Panc1 (cell line): ENCODE measurements at regions of chr6 and their contacts with region 1.

Region 1: DNA sequence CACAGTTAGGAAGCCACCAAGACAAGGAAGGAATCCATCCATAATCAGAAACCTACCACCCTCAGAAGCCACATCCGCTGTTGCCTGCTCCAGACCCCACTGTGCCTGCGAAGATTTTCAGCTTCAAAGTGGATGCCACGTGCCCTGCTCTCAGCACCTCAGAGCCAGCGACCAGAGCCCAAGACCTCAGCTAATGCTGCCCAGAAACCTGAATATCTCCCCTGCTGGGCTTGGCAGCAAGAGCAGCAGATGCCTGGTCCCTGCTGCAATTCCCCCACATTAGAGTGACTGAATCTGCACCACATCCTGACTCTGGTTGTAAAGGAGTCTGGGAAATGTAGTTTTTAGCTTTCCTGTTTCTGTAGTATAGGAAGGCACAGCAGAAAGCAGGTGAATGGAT is 10.7 kb upstream of the ULBP3 start:
- DNase-seq: no peak
- ATAC-seq: no peak
- H3K4me3 ChIP-seq: no peak overlapping the region
- H3K27ac ChIP-seq: no peak overlapping the region
- H3K4me1 ChIP-seq: no peaks in the 10 kb centered on the region
- H3K27me3 ChIP-seq: no peaks in the 10 kb centered on the region
- CTCF ChIP-seq: no peak

Region 2: GRCh38 chr6:150334790-150335783 is 255.5 kb after region 1 on chr6:
- CTCF ChIA-PET with region 1: interaction called, 3 read pairs
- POLR2A ChIA-PET with region 1: no interaction called
- in situ Hi-C with region 1: no loop called
- intact Hi-C with region 1: loop called (anchors 1 kb)
- DNase-seq: peak; percentile 41
- ATAC-seq: no peak
- H3K4me3 ChIP-seq: no peak overlapping the region
- H3K27ac ChIP-seq: no peak overlapping the region
- H3K4me1 ChIP-seq: no peaks in the 10 kb centered on the region
- H3K27me3 ChIP-seq: no peaks in the 10 kb centered on the region
- CTCF ChIP-seq: peak; percentile 83

Region 3: DNA sequence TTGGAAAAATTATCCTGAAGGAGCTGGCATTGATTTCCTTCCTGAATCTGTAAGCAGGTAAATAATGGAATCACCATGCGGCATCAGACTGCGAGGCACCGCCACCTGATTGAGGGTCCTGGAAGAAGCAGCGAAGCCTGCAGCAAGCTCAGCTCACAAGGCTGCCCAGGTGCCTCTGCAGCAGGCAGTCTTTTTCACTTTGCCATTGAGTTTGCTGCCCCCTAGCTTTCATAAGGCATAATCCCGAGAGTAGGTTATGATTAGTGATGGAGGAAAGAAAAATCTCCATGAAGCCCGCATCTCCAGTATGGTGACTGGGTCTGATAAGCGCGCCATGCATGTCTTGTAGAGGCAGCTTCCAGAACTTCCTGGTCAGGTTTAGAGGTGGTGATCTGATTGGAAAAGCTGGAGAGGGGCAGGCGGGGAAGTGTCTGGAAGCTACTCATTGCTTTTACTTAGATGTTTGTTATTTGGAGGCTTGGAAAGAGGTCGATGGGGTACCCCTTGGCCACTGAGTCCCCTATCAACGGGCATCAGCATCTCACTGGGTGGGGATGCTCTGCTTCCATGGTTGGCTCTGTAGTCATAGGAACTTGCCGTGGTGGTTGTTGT is 315.9 kb after region 1 on chr6:
- CTCF ChIA-PET with region 1: interaction called, 9 read pairs
- POLR2A ChIA-PET with region 1: interaction called, 5 read pairs
- in situ Hi-C with region 1: no loop called
- intact Hi-C with region 1: loop called (anchors 2 kb)
- DNase-seq: no peak
- ATAC-seq: peak; percentile 96
- H3K4me3 ChIP-seq: no peak overlapping the region
- H3K27ac ChIP-seq: no peak overlapping the region
- H3K4me1 ChIP-seq: no peaks in the 10 kb centered on the region
- H3K27me3 ChIP-seq: 0 out of 2 replicates have a peak, but pooled peaks cover 3% of the 10 kb centered on the region
- CTCF ChIP-seq: peak; percentile 83

Region 4: GRCh38 chr6:150741633-150742504 is 662.3 kb after region 1 on chr6:
- CTCF ChIA-PET with region 1: interaction called, 10 read pairs
- POLR2A ChIA-PET with region 1: no interaction called
- in situ Hi-C with region 1: no loop called
- intact Hi-C with region 1: no loop called
- DNase-seq: no peak
- ATAC-seq: no peak
- H3K4me3 ChIP-seq: no peak overlapping the region
- H3K27ac ChIP-seq: no peak overlapping the region
- H3K4me1 ChIP-seq: no peaks in the 10 kb centered on the region
- H3K27me3 ChIP-seq: no peaks in the 10 kb centered on the region
- CTCF ChIP-seq: peak; percentile 56

Region 5: DNA sequence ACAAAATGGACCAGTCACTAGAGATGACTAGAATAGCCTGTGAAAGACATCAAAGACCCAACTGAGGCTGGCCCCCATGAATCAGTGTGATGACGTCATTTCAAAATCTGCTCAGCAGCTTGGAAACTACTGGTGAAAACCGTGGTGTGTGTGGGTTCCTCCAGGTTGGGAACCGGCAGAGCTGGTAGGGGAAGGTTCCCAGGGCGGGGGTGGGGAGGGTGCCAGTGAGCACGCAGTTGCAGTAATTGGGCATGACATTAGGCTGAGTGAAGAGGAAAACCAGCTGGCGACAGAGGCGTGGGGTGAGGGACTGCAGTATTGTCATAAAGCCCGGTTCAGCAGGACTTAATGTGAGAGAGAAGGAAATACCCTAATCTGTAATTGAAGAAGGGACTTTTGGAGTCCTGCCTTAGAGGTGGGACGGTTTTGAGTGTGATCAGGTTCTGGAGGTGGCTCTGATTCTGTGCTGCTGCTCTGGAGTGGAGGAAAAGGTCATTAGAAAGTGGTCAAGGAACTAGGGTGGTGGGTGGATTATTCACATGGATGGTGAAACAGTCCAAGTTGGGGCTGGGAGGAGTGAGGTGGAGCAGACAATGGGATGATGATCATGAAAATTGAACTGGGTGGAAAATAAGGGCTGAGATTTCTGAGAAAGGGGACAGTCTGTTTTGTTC is 733.9 kb after region 1 on chr6:
- CTCF ChIA-PET with region 1: no interaction called
- POLR2A ChIA-PET with region 1: no interaction called
- in situ Hi-C with region 1: no loop called
- intact Hi-C with region 1: loop called (anchors 5 kb)
- DNase-seq: no peak
- ATAC-seq: no peak
- H3K4me3 ChIP-seq: no peak overlapping the region
- H3K27ac ChIP-seq: no peak overlapping the region
- H3K4me1 ChIP-seq: peaks cover 11% of the 10 kb centered on the region
- H3K27me3 ChIP-seq: no peaks in the 10 kb centered on the region
- CTCF ChIP-seq: no peak